Activated CD4-positive, alpha-beta memory T cell treated with anti-CD3 and anti-CD28 coated beads for 36 hours (primary cell): ENCODE measurements at regions of chr3 and their contacts with region 1.

Region 1: GRCh38 chr3:196317687-196318467 is at the start of gene DYNLT2B:
- DNase-seq: peak; percentile 92
- H3K4me3 Mint-ChIP-seq: peak within 1 kb of the TSS; percentile 97
- H3K27ac Mint-ChIP-seq: peak within 1 kb of the TSS; percentile 95
- H3K4me1 Mint-ChIP-seq: peaks cover 7% of the 10 kb centered on the region
- H3K27me3 Mint-ChIP-seq: no peaks in the 10 kb centered on the region
- total RNA-seq, gene DYNLT2B: 15.8 to 17.1 TPM

Region 2: GRCh38 chr3:196432137-196432879 is 114.4 kb after region 1 on chr3 and contains the start of gene UBXN7:
- CTCF ChIA-PET with region 1: no interaction called
- POLR2A ChIA-PET with region 1: no interaction called
- intact Hi-C with region 1: loop called (anchors 5 kb)
- DNase-seq: peak; percentile 98
- H3K4me3 Mint-ChIP-seq: peak within 1 kb of the TSS; percentile 75
- H3K27ac Mint-ChIP-seq: peak within 1 kb of the TSS; percentile 90
- H3K4me1 Mint-ChIP-seq: peaks cover 13% of the 10 kb centered on the region
- H3K27me3 Mint-ChIP-seq: no peaks in the 10 kb centered on the region
- total RNA-seq, gene UBXN7: 58.1 to 61.1 TPM

Region 3: GRCh38 chr3:196454935-196455334 is 137.1 kb after region 1 on chr3:
- CTCF ChIA-PET with region 1: no interaction called
- POLR2A ChIA-PET with region 1: no interaction called
- intact Hi-C with region 1: no loop called
- DNase-seq: no peak
- H3K4me3 Mint-ChIP-seq: no peak overlapping the region
- H3K27ac Mint-ChIP-seq: no peak overlapping the region
- H3K4me1 Mint-ChIP-seq: peaks cover 10% of the 10 kb centered on the region
- H3K27me3 Mint-ChIP-seq: no peaks in the 10 kb centered on the region

Region 4: GRCh38 chr3:196632046-196632751 is 314.3 kb after region 1 on chr3:
- CTCF ChIA-PET with region 1: no interaction called
- POLR2A ChIA-PET with region 1: no interaction called
- intact Hi-C with region 1: loop called (anchors 5 kb)
- DNase-seq: peak; percentile 92
- H3K4me3 Mint-ChIP-seq: peak overlapping the region; percentile 80
- H3K27ac Mint-ChIP-seq: peak overlapping the region; percentile 94
- H3K4me1 Mint-ChIP-seq: peaks cover 53% of the 10 kb centered on the region
- H3K27me3 Mint-ChIP-seq: no peaks in the 10 kb centered on the region